Colonic mucosa (tissue), 4 donors: ENCODE measurements at regions of chr1 and their contacts with region 1.

Region 1: DNA sequence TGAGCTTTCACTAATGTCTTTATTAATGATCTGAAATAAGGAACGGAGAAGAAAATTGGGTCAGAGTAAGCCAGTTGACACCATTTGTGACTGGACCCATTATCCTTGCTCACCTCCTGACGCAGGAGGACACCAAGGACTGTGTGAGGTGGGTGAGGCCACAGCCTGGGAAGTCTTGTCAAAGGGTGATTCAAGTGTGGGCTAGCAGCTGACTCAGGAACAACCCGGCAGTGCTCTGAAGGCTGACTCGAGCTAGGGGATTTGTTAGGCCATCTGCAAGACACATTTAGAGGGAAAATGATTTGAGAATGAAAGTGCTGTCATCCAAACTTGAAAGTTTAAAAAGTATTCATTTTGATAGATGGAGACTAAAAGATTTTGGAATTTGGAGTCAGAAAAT is 21.2 kb downstream of the PRRX1 start:
- DNase-seq: no peak
- H3K4me3 ChIP-seq: no peak overlapping the region
- H3K27ac ChIP-seq: no peak overlapping the region
- H3K4me1 ChIP-seq: no peaks in the 10 kb centered on the region
- H3K27me3 ChIP-seq: no peaks in the 10 kb centered on the region
- CTCF ChIP-seq: no peak

Region 2: DNA sequence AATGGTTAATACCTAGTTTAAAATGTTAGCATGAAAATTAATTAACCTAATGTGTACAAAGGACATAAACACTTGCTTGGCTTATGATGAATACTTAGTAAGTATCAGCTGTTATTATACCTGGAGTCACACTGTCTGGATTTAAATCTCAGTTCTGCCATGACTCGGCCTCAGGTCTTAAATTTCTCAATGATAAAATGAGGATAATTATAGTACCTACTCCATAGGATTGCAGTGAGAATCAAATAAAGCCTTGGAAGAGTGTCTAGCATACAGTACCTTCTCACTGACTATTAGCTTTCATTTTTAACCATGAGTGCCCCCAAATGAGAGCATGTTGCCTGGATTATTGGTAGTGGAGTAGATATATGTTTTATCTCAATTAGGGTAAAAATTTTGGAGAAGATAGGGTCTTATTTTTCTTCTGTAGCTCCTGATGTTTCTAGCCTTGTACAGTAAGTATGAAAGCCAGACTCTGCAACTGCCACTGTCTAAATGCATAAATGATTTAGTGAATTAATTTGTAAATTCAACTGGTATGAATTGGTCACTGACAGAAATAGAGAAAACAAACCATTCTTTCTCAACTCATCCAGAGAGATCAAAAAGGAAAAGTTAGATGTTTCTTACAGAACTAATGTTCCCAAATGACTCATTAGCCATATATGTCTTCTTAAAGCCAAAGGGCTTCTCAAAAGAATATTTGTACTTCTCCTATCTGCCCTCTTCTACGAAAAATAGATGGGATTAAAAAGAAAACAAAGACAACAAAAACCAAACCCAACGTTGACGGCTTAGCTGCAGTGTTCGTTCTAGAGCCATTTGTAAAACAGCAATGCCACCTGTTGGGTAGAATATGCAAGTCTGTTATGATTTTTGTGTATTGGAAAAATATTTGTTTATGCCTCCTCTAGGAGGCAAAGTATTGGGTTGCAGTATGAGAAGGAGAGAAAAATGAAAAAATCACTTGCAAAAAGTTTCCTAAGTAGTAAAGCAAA is 196.4 kb after region 1 on chr1:
- intact Hi-C with region 1: loop called (anchors 5 kb)
- DNase-seq: peak; percentile 27
- H3K4me3 ChIP-seq: no peak overlapping the region
- H3K27ac ChIP-seq: no peak overlapping the region
- H3K4me1 ChIP-seq: peaks cover 7% of the 10 kb centered on the region
- H3K27me3 ChIP-seq: no peaks in the 10 kb centered on the region
- CTCF ChIP-seq: peak; percentile 34

Region 3: GRCh38 chr1:170929835-170930554 is 244.8 kb after region 1 on chr1:
- intact Hi-C with region 1: loop called (anchors 2 kb)
- DNase-seq: no peak
- H3K4me3 ChIP-seq: no peak overlapping the region
- H3K27ac ChIP-seq: no peak overlapping the region
- H3K4me1 ChIP-seq: no peaks in the 10 kb centered on the region
- H3K27me3 ChIP-seq: no peaks in the 10 kb centered on the region
- CTCF ChIP-seq: peak; percentile 65